IMR-90 (cell line): ENCODE measurements at regions of chr7 and their contacts with region 1.

Region 1: GRCh38 chr7:92447345-92448204 is at the start of gene GATAD1:
- DNase-seq: peak; percentile 91
- ATAC-seq: peak; percentile 97
- H3K4me3 ChIP-seq: peak within 1 kb of the TSS; percentile 94
- H3K27ac ChIP-seq: peak within 1 kb of the TSS; percentile 89
- H3K4me1 ChIP-seq: 0 out of 2 replicates have a peak, but pooled peaks cover 2% of the 10 kb centered on the region
- H3K27me3 ChIP-seq: no peaks in the 10 kb centered on the region
- CTCF ChIP-seq: peak; percentile 97
- POLR2A ChIP-seq: peak; percentile 81
- RAD21 ChIP-seq: no peak
- total RNA-seq, gene GATAD1: 9.3 and 10.3 TPM in 2 replicates

Region 2: DNA sequence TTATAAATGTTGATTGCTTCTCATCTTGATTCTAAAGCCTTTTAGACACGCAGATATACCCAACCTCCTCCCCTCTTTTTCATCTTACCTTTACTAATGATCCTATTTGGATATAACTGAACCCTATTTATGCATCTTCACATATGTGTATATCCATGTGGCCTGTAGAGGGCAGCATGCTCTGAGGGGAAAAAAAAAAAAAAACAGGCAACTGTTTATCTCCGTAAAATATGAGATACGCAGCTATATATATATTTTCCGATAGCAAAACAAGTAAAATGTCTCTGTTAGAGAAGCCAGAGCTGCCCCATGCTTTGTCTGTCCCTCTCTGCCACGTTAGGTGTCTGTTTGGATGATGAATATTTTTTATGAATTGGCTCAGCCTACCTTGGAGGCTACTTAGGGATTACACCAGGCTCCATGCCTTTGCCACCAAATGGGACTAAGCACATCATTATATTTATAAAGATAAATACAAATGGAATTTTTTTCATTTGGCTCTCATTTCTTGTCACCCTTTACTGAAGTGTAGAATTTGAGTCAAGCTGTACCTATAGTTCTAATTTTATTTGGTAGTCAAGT is 1358.1 kb before region 1 on chr7:
- CTCF ChIA-PET with region 1: interaction called, 3 read pairs
- POLR2A ChIA-PET with region 1: no interaction called
- dilution Hi-C with region 1: no loop called
- in situ Hi-C with region 1: no loop called
- intact Hi-C with region 1: loop called (anchors 5 kb)
- DNase-seq: peak; percentile 48
- ATAC-seq: peak; percentile 74
- H3K4me3 ChIP-seq: peak overlapping the region; percentile 33; the same call in 1 of the 2 replicates
- H3K27ac ChIP-seq: no peak overlapping the region
- H3K4me1 ChIP-seq: no peaks in the 10 kb centered on the region
- H3K27me3 ChIP-seq: no peaks in the 10 kb centered on the region
- CTCF ChIP-seq: peak; percentile 73
- POLR2A ChIP-seq: no peak
- RAD21 ChIP-seq: peak; percentile 75

Region 3: GRCh38 chr7:91835846-91836368 is 611.7 kb before region 1 on chr7:
- CTCF ChIA-PET with region 1: interaction called, 3 read pairs
- POLR2A ChIA-PET with region 1: no interaction called
- dilution Hi-C with region 1: no loop called
- in situ Hi-C with region 1: no loop called
- intact Hi-C with region 1: loop called (anchors 5 kb)
- DNase-seq: peak; percentile 81
- ATAC-seq: peak; percentile 69
- H3K4me3 ChIP-seq: no peak overlapping the region
- H3K27ac ChIP-seq: no peak overlapping the region
- H3K4me1 ChIP-seq: no peaks in the 10 kb centered on the region
- H3K27me3 ChIP-seq: no peaks in the 10 kb centered on the region
- CTCF ChIP-seq: no peak
- POLR2A ChIP-seq: no peak
- RAD21 ChIP-seq: no peak

Region 4: DNA sequence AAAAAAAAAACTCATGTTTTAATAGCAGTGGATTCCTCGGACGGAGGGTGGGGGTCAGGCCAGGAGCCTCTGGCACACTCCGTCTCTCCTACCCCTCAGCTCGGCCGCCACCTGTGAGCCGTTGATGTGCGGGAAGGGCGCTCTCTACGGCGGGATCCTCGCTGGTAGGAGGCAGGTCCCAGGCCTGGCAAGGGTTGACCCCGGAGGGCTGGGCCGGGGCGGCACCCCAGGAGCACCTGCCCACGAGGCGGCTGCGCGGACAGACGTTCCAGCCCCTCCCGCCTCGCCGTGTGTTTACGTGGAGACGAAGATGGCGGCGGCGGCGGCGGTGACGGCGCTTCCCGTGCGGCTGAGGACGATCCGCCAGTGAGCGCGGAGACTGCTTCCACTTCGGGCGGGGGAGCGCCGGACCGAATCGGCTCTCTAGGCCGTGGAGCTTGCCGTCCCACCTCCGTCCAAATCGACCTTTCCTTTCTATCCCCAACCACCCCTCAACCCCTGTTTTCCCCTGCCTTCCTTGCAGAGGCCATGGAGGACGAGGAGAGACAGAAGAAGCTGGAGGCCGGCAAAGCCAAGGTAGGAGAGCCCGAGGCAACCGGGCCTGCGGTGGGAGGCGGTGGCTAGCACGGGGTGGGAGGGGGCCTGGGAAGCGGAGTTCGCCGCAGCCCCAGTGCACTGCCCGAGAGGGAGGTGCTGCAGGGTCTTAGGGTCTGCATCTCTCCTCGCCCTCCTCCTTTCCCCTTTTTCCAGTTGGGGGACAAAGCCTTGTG is 506.8 kb before region 1 on chr7 and contains the start of gene AKAP9:
- CTCF ChIA-PET with region 1: no interaction called
- POLR2A ChIA-PET with region 1: no interaction called
- dilution Hi-C with region 1: no loop called
- in situ Hi-C with region 1: no loop called
- intact Hi-C with region 1: loop called (anchors 5 kb)
- DNase-seq: peak; percentile 57
- ATAC-seq: peak; percentile 86
- H3K4me3 ChIP-seq: peak within 1 kb of the TSS; percentile 80
- H3K27ac ChIP-seq: peak within 1 kb of the TSS; percentile 98
- H3K4me1 ChIP-seq: peaks cover 2% of the 10 kb centered on the region; the same call in 1 of the 2 replicates
- H3K27me3 ChIP-seq: no peaks in the 10 kb centered on the region
- CTCF ChIP-seq: no peak
- POLR2A ChIP-seq: peak; percentile 70; the same call in 1 of the 2 replicates
- RAD21 ChIP-seq: no peak
- total RNA-seq, gene AKAP9: 25.3 and 49.4 TPM in 2 replicates

Region 5: DNA sequence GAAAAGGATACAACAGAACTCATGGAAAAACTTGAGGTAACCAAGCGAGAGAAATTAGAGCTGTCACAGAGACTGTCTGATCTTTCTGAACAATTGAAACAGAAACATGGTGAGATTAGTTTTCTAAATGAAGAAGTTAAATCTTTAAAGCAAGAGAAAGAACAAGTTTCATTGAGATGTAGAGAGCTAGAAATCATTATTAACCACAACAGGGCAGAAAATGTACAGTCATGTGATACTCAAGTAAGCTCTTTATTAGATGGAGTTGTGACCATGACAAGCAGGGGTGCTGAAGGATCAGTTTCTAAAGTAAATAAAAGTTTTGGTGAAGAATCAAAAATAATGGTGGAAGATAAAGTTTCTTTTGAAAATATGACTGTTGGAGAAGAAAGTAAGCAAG is 444.9 kb before region 1 on chr7:
- CTCF ChIA-PET with region 1: no interaction called
- POLR2A ChIA-PET with region 1: no interaction called
- dilution Hi-C with region 1: no loop called
- in situ Hi-C with region 1: no loop called
- intact Hi-C with region 1: no loop called
- DNase-seq: no peak
- ATAC-seq: no peak
- H3K4me3 ChIP-seq: no peak overlapping the region
- H3K27ac ChIP-seq: no peak overlapping the region
- H3K4me1 ChIP-seq: no peaks in the 10 kb centered on the region
- H3K27me3 ChIP-seq: no peaks in the 10 kb centered on the region
- CTCF ChIP-seq: no peak
- POLR2A ChIP-seq: no peak
- RAD21 ChIP-seq: no peak

Region 6: GRCh38 chr7:92178927-92179924 is 268.3 kb before region 1 on chr7 and contains the start of gene LRRD1:
- CTCF ChIA-PET with region 1: interaction called, 5 read pairs
- POLR2A ChIA-PET with region 1: no interaction called
- dilution Hi-C with region 1: no loop called
- in situ Hi-C with region 1: no loop called
- intact Hi-C with region 1: loop called (anchors 2 kb)
- DNase-seq: peak; percentile 73
- ATAC-seq: peak; percentile 99
- H3K4me3 ChIP-seq: peak within 1 kb of the TSS; percentile 35
- H3K27ac ChIP-seq: 0 out of 2 replicates have a peak within 1 kb of the TSS, but pooled peaks have one; percentile 3
- H3K4me1 ChIP-seq: peaks cover 4% of the 10 kb centered on the region; the same call in 1 of the 2 replicates
- H3K27me3 ChIP-seq: no peaks in the 10 kb centered on the region
- CTCF ChIP-seq: peak; percentile 90
- POLR2A ChIP-seq: no peak
- RAD21 ChIP-seq: peak; percentile 54
- total RNA-seq, gene LRRD1: under 0.01 TPM in 2 replicates

Region 7: DNA sequence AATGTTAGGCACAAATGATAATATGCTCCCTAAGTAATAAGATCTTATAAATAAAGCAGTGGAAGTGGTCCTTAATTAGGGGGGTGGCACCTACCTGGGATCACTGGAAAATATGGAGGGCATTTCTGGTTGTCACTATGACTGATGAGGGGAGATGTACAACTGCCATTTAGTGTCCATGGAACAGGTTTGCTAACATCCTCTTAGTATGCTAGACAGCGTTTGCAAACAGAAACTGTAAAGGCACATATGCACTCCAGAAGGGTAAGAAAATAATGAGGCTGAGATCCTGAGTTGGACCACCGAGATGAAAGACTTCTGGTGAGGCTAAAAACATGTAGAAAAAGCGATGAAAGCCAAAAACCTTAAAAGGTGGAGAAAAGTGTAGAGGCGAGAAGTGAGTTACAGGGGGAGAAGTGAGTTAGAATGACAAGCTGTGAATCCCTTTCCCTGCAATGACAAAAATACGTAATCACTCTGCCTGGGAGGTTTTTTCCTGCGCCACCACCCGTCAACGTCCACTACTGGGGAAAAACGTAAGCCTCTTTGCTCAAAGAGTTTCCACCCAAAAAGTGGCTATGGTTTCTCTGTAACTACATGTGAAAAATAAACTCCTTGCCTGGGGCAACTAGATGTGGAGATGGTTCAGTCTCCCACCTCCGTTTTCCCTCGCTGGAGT is 202.6 kb before region 1 on chr7:
- CTCF ChIA-PET with region 1: no interaction called
- POLR2A ChIA-PET with region 1: no interaction called
- dilution Hi-C with region 1: no loop called
- in situ Hi-C with region 1: no loop called
- intact Hi-C with region 1: loop called (anchors 5 kb)
- DNase-seq: peak; percentile 7
- ATAC-seq: peak; percentile 1; the same call in 1 of the 2 replicates
- H3K4me3 ChIP-seq: peak overlapping the region; percentile 83
- H3K27ac ChIP-seq: peak overlapping the region; percentile 93
- H3K4me1 ChIP-seq: no peaks in the 10 kb centered on the region; the same call in 1 of the 2 replicates
- H3K27me3 ChIP-seq: no peaks in the 10 kb centered on the region
- CTCF ChIP-seq: no peak
- POLR2A ChIP-seq: no peak
- RAD21 ChIP-seq: no peak

Region 8: DNA sequence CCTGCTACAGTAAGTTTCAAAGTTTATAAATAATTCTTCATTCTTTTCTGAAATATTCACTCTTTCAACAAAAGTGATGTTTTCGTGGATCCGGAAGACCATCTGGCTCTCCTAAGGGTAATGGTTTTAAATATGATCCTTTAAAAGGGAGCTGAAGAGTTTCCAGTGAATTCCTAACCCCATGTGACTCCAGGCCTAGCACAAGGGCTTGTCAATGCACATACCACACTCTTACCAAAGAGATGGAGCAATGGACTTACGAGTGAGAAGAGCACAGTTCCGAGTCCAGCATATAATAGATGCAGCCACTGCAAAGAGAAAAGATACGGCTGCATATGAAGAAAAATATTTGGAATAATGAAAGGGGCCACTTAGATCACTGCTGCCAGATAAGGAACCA is 32.4 kb before region 1 on chr7:
- CTCF ChIA-PET with region 1: no interaction called
- POLR2A ChIA-PET with region 1: no interaction called
- dilution Hi-C with region 1: no loop called
- in situ Hi-C with region 1: no loop called
- intact Hi-C with region 1: no loop called
- DNase-seq: peak; percentile 12
- ATAC-seq: peak; percentile 51; the same call in 1 of the 2 replicates
- H3K4me3 ChIP-seq: no peak overlapping the region
- H3K27ac ChIP-seq: no peak overlapping the region
- H3K4me1 ChIP-seq: no peaks in the 10 kb centered on the region
- H3K27me3 ChIP-seq: peaks cover 18% of the 10 kb centered on the region
- CTCF ChIP-seq: no peak
- POLR2A ChIP-seq: no peak
- RAD21 ChIP-seq: no peak

Region 9: DNA sequence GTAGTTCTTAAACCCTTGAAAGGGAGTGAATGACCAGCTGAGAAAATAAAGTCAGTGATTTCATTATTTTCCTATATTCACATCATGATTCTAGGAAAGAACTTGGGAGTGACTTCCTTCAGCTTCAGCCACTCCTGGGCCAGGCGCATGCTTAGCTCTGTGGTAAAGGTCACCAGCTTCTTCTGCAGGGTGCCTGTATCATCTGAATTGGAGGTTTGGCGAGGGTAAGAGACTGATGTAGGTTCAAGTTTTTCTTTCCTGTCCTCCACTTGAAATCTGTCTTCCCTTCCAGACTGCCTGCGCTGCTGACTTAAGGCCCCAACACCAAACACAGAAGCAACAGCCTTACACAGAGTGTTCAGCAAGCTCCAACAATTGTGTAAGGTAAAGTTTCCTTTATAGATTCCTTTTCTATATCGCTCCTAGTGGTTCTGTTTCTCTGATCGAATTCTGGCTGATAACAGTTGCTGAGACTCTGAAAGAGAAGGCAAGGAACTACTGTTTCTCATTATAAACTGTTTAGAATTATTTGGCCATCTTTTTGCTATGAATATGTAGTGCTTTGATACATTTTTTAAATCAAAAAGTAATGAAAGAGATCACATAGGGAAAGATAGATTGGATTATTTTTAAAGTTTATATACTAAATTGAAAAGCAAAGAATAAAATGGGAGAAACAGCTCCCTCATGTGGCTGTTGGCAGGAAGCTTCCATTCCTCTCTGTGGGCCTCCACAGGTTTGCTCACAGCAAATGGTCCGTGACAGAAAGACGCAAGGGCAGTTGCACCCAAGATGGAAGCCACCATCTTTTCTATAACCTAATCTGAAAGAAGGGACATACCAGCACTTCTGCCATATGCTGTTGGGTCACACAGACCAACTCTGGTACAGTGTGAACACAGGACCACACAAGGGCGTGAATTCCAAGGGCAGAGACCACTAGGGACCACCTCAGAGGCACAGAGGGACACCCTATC is 13.7 kb after region 1 on chr7:
- CTCF ChIA-PET with region 1: interaction called, 12 read pairs
- POLR2A ChIA-PET with region 1: no interaction called
- dilution Hi-C with region 1: no loop called
- in situ Hi-C with region 1: no loop called
- intact Hi-C with region 1: no loop called
- DNase-seq: peak; percentile 38
- ATAC-seq: peak; percentile 89
- H3K4me3 ChIP-seq: no peak overlapping the region
- H3K27ac ChIP-seq: no peak overlapping the region
- H3K4me1 ChIP-seq: no peaks in the 10 kb centered on the region
- H3K27me3 ChIP-seq: no peaks in the 10 kb centered on the region
- CTCF ChIP-seq: peak; percentile 70
- POLR2A ChIP-seq: no peak
- RAD21 ChIP-seq: peak; percentile 62